RWPE1 (cell line): ENCODE measurements at regions of chr17 and their contacts with region 1.

Region 1: DNA sequence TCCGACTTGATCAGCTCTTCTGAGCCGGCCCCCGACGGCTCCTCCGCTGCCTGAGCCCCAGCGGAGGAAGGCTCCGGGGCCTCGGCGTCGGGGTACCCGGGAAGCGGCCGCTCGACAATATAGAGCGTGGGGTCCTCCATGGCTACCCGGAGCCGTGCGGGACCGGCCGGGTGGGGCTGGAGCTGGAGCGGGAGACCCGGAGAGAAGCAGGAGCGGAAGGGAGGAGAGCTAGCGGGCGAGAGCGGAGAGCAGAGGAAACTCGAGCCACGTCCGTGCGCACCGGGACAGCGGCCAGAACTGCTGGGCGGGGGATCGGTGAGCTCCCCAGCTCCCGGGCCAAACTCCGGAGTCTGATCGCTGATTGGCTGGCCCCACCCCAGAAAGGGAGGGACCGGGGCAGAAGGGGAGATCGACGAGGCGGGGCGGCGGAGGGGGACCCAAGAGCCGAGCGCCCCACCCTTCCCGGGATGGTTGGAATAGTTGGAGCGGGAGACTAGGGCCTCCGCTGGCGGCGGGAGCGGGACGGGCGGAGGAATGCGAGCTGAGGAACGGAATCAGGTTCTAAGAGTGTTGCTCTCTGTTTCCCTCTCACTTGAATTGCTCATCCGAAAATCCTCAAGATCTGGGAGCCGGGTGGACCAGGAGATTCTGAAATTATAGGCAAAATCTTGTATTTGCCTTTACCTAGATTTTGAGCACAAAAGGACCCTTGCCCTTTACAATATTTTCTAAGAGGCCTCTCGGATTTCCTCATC is at the start of gene CAVIN1:
- DNase-seq: peak; percentile 99
- H3K27ac ChIP-seq: peak within 1 kb of the TSS; percentile 98
- CTCF ChIP-seq: no peak

Region 2: GRCh38 chr17:42183741-42184711 is 239.1 kb before region 1 on chr17:
- CTCF ChIA-PET with region 1: no interaction called
- POLR2A ChIA-PET with region 1: no interaction called
- DNase-seq: no peak
- H3K27ac ChIP-seq: no peak overlapping the region
- CTCF ChIP-seq: peak; percentile 74

Region 3: DNA sequence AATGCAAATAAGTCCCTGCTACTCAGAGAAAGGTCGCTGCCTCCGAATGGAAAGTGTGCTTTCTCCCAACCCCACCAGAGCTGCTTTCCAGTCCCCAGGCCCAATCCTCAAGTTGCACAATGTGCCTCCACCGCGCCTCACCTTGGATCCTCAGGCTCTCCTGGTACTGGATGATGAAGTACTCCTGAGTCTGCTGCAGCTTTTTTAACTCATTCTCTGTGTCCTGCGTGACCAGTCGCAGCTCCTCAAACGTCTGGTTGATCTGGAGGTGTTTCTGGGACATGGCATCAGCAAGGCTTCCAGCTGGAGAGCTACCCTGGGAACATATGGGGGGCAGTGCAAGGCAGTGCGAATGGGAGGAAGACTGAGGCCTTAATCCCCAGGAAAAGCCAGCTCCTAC is 199.9 kb before region 1 on chr17:
- CTCF ChIA-PET with region 1: no interaction called
- POLR2A ChIA-PET with region 1: no interaction called
- DNase-seq: no peak
- H3K27ac ChIP-seq: no peak overlapping the region
- CTCF ChIP-seq: no peak

Region 4: GRCh38 chr17:42388381-42389134 is 34.6 kb before region 1 on chr17 and contains the start of gene STAT3:
- CTCF ChIA-PET with region 1: no interaction called
- POLR2A ChIA-PET with region 1: interaction called, 11 read pairs
- DNase-seq: peak; percentile 99
- H3K27ac ChIP-seq: peak within 1 kb of the TSS; percentile 97
- CTCF ChIP-seq: no peak

Region 5: DNA sequence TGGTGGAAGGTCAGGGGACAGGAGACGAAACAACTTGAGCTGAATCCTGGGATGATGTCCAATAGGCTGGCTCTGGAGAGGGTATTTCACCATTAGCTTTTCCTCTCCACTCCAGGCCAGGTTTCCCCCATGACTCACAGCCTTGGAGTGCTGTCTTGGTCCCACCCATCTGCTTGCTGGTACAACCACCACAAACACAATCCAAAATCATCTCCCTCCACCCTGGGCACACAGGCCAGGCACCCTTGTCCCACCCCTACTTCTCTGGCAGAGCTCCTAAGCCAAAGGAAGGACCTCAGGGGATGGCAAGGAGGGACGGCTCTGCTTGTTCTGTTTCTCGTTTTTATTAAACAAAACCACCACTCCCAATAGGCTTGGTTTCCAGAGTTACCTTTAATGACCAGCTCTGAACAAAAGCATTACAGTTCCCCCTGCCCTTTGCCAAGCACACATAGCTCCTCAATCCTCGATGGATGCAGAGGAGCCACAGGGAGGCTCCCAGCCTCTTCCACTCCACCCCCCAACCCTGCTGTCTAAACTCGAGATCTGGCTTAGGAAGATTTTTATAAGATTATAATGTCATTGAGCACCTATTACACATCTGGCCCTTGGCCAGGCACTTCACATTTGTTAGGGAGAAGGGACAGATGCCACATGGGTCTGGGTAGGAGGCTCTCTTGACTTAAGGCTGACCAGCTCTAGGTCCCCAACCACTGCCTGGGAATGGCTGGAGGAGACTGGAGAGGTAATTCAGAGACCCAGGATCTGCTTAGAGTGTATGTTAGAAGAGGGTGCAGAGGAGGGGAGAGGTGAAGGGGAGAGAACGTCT is 13.4 kb before region 1 on chr17:
- CTCF ChIA-PET with region 1: interaction called, 9 read pairs
- POLR2A ChIA-PET with region 1: interaction called, 17 read pairs
- DNase-seq: peak; percentile 96
- H3K27ac ChIP-seq: peak overlapping the region; percentile 96
- CTCF ChIP-seq: no peak

Region 6: DNA sequence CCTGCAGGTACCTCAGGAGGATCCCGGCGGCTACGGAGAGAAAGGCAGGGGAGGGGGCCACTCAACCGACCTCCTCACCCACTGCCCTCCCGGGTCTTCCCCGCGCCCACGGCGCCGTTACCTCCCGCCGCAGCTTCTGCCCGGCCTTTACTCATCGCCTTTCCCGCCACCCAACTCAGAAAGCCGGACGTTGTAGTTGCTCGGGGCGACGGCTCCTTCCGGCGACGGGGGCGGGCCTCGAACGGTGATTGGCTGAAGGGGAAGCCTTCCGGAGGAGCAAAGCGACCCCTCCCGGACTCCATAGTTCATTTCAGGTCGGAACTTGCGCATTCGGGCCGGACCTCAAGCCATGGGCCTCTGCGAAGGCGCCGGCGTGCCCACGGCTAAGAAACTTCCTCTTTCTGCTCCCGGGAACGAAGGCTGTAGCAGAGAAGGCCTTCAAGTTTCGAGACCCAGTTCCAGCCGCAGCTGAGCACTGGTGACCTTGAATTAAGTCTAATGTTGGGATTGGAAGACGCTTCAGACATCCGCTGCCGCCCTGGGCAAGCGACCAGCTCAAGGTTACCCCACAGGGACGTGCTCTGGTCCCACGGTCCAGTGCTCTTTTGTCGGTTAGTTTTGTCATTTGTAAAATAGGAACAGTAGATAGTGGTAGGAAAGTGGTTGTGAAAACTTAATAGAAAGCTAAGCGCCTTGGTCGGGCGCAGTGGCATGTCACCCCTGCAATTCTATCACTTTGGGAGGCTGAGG is 154.6 kb after region 1 on chr17 and contains the start of gene PSMC3IP:
- CTCF ChIA-PET with region 1: no interaction called
- POLR2A ChIA-PET with region 1: no interaction called
- DNase-seq: peak; percentile 98
- H3K27ac ChIP-seq: peak within 1 kb of the TSS; percentile 92
- CTCF ChIP-seq: no peak